Endothelial cell of umbilical vein (primary cell): ENCODE measurements at regions of chr20 and their contacts with region 1.

Region 1: GRCh38 chr20:297098-297924 is at the start of gene ZCCHC3:
- DNase-seq: peak; percentile 88
- H3K4me3 ChIP-seq: peak within 1 kb of the TSS; percentile 53 to 78 (median 63)
- H3K27ac ChIP-seq: peak within 1 kb of the TSS; percentile 83
- H3K4me1 ChIP-seq: peaks cover 33% of the 10 kb centered on the region
- H3K27me3 ChIP-seq: no peaks in the 10 kb centered on the region
- CTCF ChIP-seq: peak in 1 of 2 donors; percentile 17
- POLR2A ChIP-seq: peak; percentile 79
- total RNA-seq, gene ZCCHC3: 22.0 and 24.1 TPM in 2 replicates

Region 2: DNA sequence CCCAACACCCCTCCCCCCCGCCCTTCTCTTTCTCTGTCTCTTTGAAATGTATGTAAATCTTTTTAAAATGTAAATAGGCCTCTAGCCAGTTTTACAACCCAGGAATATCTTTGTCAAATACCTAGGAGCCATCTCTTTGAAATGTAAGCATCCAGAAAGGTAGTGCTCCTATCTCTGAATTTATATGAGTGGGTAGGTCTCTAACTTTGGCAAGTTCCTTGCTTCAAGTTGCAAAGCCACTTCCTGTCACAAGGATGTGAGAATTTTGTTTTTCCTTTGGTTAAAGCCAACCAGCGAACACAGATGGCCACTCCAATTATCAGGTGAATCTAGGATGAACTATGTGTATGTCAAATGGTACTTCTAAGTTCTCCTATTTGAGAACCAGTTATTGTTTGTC is 46.0 kb before region 1 on chr20:
- CTCF ChIA-PET with region 1: no interaction called
- POLR2A ChIA-PET with region 1: no interaction called
- dilution Hi-C with region 1: no loop called
- intact Hi-C with region 1: no loop called
- DNase-seq: no peak
- H3K4me3 ChIP-seq: no peak overlapping the region
- H3K27ac ChIP-seq: no peak overlapping the region
- H3K4me1 ChIP-seq: no peaks in the 10 kb centered on the region
- H3K27me3 ChIP-seq: peaks cover 2 to 10% of the 10 kb centered on the region in 2 experiments
- CTCF ChIP-seq: no peak
- POLR2A ChIP-seq: no peak

Region 3: DNA sequence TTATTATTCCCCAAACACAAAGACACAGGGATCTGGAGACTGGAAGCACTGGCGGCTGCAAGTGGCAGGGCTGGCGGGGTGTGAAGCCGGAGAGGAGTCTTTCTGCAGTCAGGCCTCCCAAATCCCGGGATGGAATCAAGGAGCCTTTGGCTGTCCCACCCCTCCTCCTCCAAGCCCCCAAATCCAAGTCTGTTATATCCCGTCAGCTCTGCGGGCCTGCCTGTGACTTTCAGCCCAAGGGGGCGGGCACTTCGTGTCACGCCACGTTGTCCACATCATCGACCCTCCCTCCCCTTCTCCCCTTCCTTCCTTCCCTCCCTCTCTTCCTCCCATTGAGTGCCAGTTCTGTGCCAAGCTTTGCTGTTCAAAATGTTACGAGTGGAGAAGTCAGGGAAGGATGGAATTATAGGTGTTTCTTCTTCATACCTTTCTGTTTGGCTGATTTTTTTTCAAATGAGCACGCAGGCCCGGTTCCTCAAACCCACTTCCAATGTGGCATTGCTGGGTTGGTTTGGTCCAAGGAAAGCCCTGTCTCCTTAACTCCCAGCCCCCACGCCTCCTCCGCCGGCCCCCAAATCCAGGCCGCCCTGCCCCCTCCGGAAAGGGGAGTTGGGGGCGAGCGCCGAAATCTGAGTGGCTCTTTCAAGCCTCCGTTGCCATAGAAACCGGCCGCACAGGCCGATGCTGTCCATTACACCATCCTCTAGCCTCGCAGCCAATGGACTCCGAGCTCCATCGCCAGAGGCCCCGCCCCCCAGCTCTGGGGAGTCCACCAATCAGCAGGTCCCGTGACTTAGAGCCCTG is 12.7 kb after region 1 on chr20:
- CTCF ChIA-PET with region 1: interaction called, 18 read pairs
- POLR2A ChIA-PET with region 1: interaction called, 7 read pairs
- dilution Hi-C with region 1: no loop called
- intact Hi-C with region 1: loop called (anchors 1 kb)
- DNase-seq: peak; percentile 99
- H3K4me3 ChIP-seq: peak overlapping the region; percentile 34 to 54 (median 41)
- H3K27ac ChIP-seq: peak overlapping the region; percentile 96
- H3K4me1 ChIP-seq: peaks cover 31% of the 10 kb centered on the region
- H3K27me3 ChIP-seq: no peaks in the 10 kb centered on the region
- CTCF ChIP-seq: no peak
- POLR2A ChIP-seq: peak; percentile 86

Region 4: GRCh38 chr20:555933-556526 is 258.7 kb after region 1 on chr20:
- CTCF ChIA-PET with region 1: no interaction called
- POLR2A ChIA-PET with region 1: no interaction called
- dilution Hi-C with region 1: no loop called
- intact Hi-C with region 1: no loop called
- DNase-seq: no peak
- H3K4me3 ChIP-seq: no peak overlapping the region
- H3K27ac ChIP-seq: no peak overlapping the region
- H3K4me1 ChIP-seq: no peaks in the 10 kb centered on the region
- H3K27me3 ChIP-seq: peaks cover 26 to 29% of the 10 kb centered on the region in 2 experiments
- CTCF ChIP-seq: no peak
- POLR2A ChIP-seq: no peak